ENCODE measurements at regions of chr3 and their contacts with region 1.

Region 1: DNA sequence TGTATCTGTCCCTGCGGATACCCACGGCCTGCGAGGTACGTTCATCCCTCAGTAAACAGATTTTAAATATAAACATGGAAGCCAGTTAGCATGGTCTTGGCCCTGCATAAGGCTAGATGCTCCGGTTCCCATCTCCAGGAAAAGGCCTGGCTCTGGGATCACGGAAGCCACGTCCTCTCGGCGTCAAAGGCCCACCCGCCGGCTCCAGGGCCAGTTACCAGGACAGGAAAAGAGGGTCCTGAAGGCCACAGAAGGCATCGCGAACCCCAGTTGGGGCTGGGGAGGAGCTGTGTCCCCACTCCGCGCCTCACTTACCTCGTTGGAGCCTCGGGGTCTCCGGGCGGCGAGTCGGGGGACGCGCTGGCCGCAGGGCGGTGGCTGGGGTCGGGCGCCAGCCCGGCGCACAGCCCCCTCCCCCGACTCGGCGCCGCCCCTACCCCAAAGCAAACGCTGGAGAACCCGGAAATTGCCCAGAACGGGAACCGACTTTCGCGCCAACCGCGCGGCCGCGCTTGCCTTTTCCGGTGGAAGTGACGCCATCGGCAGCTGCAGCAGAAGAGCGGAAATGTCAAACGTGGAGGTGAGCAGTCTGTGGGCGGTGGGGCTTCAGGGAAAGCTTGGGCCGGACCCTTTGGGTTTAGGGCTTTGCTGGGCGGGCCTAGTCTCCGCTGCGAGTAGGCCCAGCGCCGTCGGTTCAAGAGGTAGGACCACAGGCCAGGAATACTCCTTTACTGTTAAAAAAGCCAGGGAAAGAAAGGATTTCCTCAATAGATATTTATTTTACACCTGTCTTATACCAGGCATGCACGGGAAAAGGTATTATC is at the start of gene TOPBP1:
- DNase-seq: peak; percentile 52 to 73
- H3K4me3 ChIP-seq: peak within 1 kb of the TSS; percentile 95
- H3K27ac ChIP-seq: peak within 1 kb of the TSS; percentile 36; the same call in 1 of the 2 replicates
- H3K4me1 ChIP-seq: peaks cover 22% of the 10 kb centered on the region; the same call in 1 of the 2 replicates
- H3K27me3 ChIP-seq: no peaks in the 10 kb centered on the region
- CTCF ChIP-seq: no peak
- total RNA-seq, gene TOPBP1: 42.2 and 52.2 TPM in 2 replicates

Region 2: DNA sequence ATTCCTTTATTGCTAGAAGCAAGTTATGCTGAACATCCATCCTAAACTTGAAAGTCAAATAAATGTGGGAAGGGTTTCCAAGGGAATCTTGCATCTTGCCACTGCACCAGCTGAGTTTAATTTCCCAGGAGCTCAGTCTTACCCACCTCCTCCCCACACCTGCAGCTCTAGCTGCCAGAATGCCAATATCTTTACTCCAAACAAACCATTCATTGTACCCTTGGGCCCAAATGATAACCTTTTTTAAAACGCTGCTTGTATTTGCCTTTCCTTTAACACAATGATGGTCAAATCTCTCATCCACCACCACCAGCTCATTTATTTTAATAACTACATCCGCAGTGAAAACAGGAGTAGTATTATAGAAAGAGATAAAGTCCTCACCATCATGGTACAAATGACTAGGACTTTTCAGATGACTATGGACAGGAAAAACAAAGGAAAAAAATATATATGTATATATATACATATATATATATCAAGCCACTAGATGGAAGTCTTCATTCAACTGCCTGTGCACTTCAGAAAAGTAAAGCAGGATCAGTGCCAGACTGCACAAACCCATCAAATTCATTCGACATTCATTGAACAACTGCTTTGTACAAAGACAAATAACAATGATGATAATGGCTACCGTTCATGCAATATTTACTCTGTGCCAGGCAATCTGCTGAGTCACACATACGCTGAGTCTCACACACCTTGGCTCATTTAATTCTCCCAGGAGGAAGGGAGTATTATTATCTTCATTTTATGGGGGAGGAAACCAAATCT is 217.8 kb before region 1 on chr3:
- CTCF ChIA-PET with region 1: no interaction called
- POLR2A ChIA-PET with region 1: no interaction called
- intact Hi-C with region 1: loop called (anchors 5 kb)
- DNase-seq: peak; percentile 41 to 90
- H3K4me3 ChIP-seq: no peak overlapping the region
- H3K27ac ChIP-seq: peak overlapping the region; percentile 76
- H3K4me1 ChIP-seq: peaks cover 15% of the 10 kb centered on the region
- H3K27me3 ChIP-seq: no peaks in the 10 kb centered on the region
- CTCF ChIP-seq: peak; percentile 52

Region 3: GRCh38 chr3:133805527-133806475 is 144.1 kb after region 1 on chr3 and contains the start of gene SRPRB:
- CTCF ChIA-PET with region 1: no interaction called
- POLR2A ChIA-PET with region 1: no interaction called
- intact Hi-C with region 1: loop called (anchors 2 kb)
- DNase-seq: peak; percentile 89 to 92
- H3K4me3 ChIP-seq: peak within 1 kb of the TSS; percentile 79
- H3K27ac ChIP-seq: peak within 1 kb of the TSS; percentile 43; the same call in 1 of the 2 replicates
- H3K4me1 ChIP-seq: peaks cover 18% of the 10 kb centered on the region
- H3K27me3 ChIP-seq: no peaks in the 10 kb centered on the region
- CTCF ChIP-seq: no peak
- total RNA-seq, gene SRPRB: 25.5 and 29.8 TPM in 2 replicates

Region 4: GRCh38 chr3:133943639-133944141 is 282.0 kb after region 1 on chr3:
- CTCF ChIA-PET with region 1: no interaction called
- POLR2A ChIA-PET with region 1: no interaction called
- intact Hi-C with region 1: loop called (anchors 10 kb)
- DNase-seq: peak; percentile 78 to 92
- H3K4me3 ChIP-seq: no peak overlapping the region
- H3K27ac ChIP-seq: no peak overlapping the region
- H3K4me1 ChIP-seq: peaks cover 30% of the 10 kb centered on the region
- H3K27me3 ChIP-seq: peaks cover 62% of the 10 kb centered on the region
- CTCF ChIP-seq: no peak

Region 5: GRCh38 chr3:134197681-134198261 is 536.1 kb after region 1 on chr3:
- CTCF ChIA-PET with region 1: interaction called, 10 read pairs
- POLR2A ChIA-PET with region 1: no interaction called
- intact Hi-C with region 1: no loop called
- DNase-seq: peak; percentile 18 to 51
- H3K4me3 ChIP-seq: no peak overlapping the region
- H3K27ac ChIP-seq: no peak overlapping the region
- H3K4me1 ChIP-seq: peaks cover 22% of the 10 kb centered on the region
- H3K27me3 ChIP-seq: no peaks in the 10 kb centered on the region
- CTCF ChIP-seq: peak; percentile 81

Measured in PC-9 (cell line).